ENCODE measurements at regions of chr7 and their contacts with region 1.

Region 1: GRCh38 chr7:143337216-143337615 is 21.3 kb downstream of the CLCN1 start:
- DNase-seq: no peak
- H3K4me3 ChIP-seq: no peak overlapping the region
- H3K27ac ChIP-seq: no peak overlapping the region
- H3K4me1 ChIP-seq: no peaks in the 10 kb centered on the region
- H3K27me3 ChIP-seq: no peaks in the 10 kb centered on the region
- CTCF ChIP-seq: no peak
- EP300 ChIP-seq: no peak
- POLR2A ChIP-seq: no peak
- RAD21 ChIP-seq: no peak

Region 2: GRCh38 chr7:143321734-143322133 is 15.5 kb before region 1 on chr7:
- CTCF ChIA-PET with region 1: interaction called, 30 read pairs
- POLR2A ChIA-PET with region 1: interaction called, 3 read pairs
- DNase-seq: no peak
- H3K4me3 ChIP-seq: no peak overlapping the region
- H3K27ac ChIP-seq: no peak overlapping the region
- H3K4me1 ChIP-seq: peaks cover 0 to 5% (median 0%) of the 10 kb centered on the region in 4 experiments; a peak in 1 of 7 replicates
- H3K27me3 ChIP-seq: no peaks in the 10 kb centered on the region
- CTCF ChIP-seq: peak; percentile 25 to 41 (median 38)
- EP300 ChIP-seq: no peak
- POLR2A ChIP-seq: no peak
- RAD21 ChIP-seq: peak; percentile 43 to 64

Measured in H1 (cell line).